ENCODE measurements at regions of chr16 and their contacts with region 1.

Region 1: DNA sequence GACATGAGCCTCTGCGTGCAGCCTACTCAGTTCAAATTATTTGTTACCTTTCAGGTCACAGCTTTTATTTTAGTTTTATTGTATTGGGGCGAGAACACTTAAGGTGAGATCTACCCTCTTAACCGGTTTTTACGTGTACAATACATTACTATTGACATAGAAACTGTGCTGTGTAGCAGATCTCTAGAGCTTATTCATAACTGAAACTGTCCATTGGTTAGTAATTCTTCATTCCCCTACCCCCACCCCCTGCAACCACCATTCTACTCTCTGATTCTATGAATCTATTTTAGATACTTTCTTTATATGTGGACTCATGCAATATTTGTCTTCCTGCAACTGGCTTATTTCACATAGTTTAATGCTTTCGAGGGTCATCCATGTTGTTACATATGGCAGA is 43.5 kb downstream of the KNOP1 start:
- DNase-seq: no peak
- ATAC-seq: no peak
- H3K4me3 ChIP-seq: no peak overlapping the region
- H3K27ac ChIP-seq: no peak overlapping the region
- H3K4me1 ChIP-seq: no peaks in the 10 kb centered on the region
- H3K27me3 ChIP-seq: no peaks in the 10 kb centered on the region
- CTCF ChIP-seq: no peak

Region 2: GRCh38 chr16:19645557-19645981 is 28.9 kb before region 1 on chr16:
- CTCF ChIA-PET with region 1: no interaction called
- POLR2A ChIA-PET with region 1: interaction called, 10 read pairs
- in situ Hi-C with region 1: no loop called
- intact Hi-C with region 1: no loop called
- DNase-seq: no peak
- ATAC-seq: no peak
- H3K4me3 ChIP-seq: no peak overlapping the region
- H3K27ac ChIP-seq: no peak overlapping the region
- H3K4me1 ChIP-seq: no peaks in the 10 kb centered on the region
- H3K27me3 ChIP-seq: no peaks in the 10 kb centered on the region
- CTCF ChIP-seq: no peak

Measured in Panc1 (cell line).